Panc1 (cell line): ENCODE measurements at regions of chr16 and their contacts with region 1.

Region 1: DNA sequence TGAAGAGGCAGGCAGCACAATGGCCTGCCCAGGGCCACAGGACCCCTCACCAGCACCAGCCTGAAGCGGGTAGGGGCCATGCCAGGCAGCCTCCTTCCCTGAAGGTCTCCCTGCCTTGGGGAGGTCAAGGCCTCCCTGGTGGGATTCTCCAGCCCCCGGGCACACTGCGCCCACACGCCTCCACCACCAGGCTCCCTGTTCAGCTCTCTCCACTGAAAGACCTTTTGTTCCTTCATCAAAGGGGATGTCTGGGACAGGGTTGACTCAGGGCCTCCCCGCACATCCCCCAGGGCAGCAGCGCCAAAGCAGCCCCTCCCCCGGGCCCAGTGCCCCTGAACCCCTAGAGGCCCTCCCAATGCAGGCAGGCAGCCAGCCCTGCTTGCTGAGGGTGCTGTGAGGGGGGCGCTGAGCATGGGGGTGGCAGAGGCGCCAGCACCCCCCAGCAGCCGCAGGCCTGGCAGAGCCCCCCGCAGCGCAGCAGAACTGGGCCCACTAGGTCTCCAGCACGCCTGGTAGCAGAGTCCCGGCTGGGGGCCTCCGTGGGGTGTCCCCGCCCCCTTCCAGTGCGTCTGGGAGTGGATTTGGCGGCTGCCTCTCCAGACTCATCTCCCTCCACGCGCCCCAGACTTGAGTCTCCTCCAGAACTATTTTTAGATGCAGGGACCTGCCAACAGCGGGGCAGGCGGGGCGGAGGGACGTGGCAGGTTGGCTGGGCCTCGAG is 13.1 kb downstream of the BCAR1 start:
- DNase-seq: no peak
- ATAC-seq: peak; percentile 0; the same call in 1 of the 2 replicates
- H3K4me3 ChIP-seq: no peak overlapping the region
- H3K27ac ChIP-seq: peak overlapping the region; percentile 59; the same call in 1 of the 2 replicates
- H3K4me1 ChIP-seq: peaks cover 31% of the 10 kb centered on the region
- H3K27me3 ChIP-seq: no peaks in the 10 kb centered on the region
- CTCF ChIP-seq: no peak

Region 2: DNA sequence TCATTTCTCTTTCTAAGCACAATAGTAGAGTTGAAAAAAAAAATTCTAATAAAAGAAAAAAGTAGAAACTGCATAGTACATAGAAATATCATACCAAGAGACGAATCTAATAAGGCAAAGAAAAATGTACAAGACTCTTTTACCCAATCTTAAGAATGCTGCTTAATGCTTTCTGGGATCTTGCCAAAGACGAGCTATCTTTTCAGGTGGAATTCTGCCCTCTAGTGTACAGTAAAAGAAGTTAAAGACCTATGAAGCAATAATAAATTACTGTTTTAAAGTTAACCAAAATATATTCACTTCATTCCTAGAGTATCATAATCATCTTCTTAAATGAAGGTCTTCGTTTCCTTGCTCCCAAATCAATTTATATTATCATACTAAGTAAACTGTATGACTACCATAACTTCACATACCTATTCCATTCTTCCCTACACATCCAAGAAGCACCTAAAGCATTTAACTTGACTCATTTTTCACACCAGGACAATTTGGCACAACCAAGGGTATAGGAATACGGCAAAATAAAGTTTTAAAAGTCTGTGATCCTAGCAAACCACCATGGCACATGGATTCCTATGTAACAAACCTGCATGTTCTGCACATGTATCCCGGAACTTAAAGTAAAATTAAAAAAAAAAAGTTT is 147.3 kb after region 1 on chr16:
- CTCF ChIA-PET with region 1: interaction called, 8 read pairs
- POLR2A ChIA-PET with region 1: no interaction called
- in situ Hi-C with region 1: no loop called
- intact Hi-C with region 1: loop called (anchors 10 kb)
- DNase-seq: peak; percentile 42
- ATAC-seq: no peak
- H3K4me3 ChIP-seq: no peak overlapping the region
- H3K27ac ChIP-seq: no peak overlapping the region
- H3K4me1 ChIP-seq: no peaks in the 10 kb centered on the region
- H3K27me3 ChIP-seq: no peaks in the 10 kb centered on the region
- CTCF ChIP-seq: peak; percentile 58; the same call in 1 of the 2 replicates